Transverse colon (tissue), 4 donors: ENCODE measurements at regions of chr14 and their contacts with region 1.

Region 1: GRCh38 chr14:27078191-27078590 is 480.4 kb upstream of the NOVA1 start:
- DNase-seq: no peak
- H3K4me3 ChIP-seq: no peak overlapping the region
- H3K27ac ChIP-seq: no peak overlapping the region
- H3K4me1 ChIP-seq: no peaks in the 10 kb centered on the region
- H3K27me3 ChIP-seq: no peaks in the 10 kb centered on the region
- CTCF ChIP-seq: no peak
- EP300 ChIP-seq: no peak
- POLR2A ChIP-seq: no peak

Region 2: GRCh38 chr14:25765909-25766308 is 1312.3 kb before region 1 on chr14:
- in situ Hi-C with region 1: no loop called
- intact Hi-C with region 1: no loop called
- DNase-seq: no peak
- H3K4me3 ChIP-seq: no peak overlapping the region
- H3K27ac ChIP-seq: no peak overlapping the region
- H3K4me1 ChIP-seq: no peaks in the 10 kb centered on the region
- H3K27me3 ChIP-seq: no peaks in the 10 kb centered on the region
- CTCF ChIP-seq: no peak
- EP300 ChIP-seq: no peak
- POLR2A ChIP-seq: no peak

Region 3: GRCh38 chr14:26738571-26738970 is 339.6 kb before region 1 on chr14:
- in situ Hi-C with region 1: no loop called
- intact Hi-C with region 1: no loop called
- DNase-seq: no peak
- H3K4me3 ChIP-seq: no peak overlapping the region
- H3K27ac ChIP-seq: no peak overlapping the region
- H3K4me1 ChIP-seq: no peaks in the 10 kb centered on the region
- H3K27me3 ChIP-seq: no peaks in the 10 kb centered on the region
- CTCF ChIP-seq: no peak
- EP300 ChIP-seq: no peak
- POLR2A ChIP-seq: no peak

Region 4: GRCh38 chr14:26959972-26960664 is 118.1 kb before region 1 on chr14:
- in situ Hi-C with region 1: no loop called
- intact Hi-C with region 1: loop called (anchors 5 kb)
- DNase-seq: no peak
- H3K4me3 ChIP-seq: no peak overlapping the region
- H3K27ac ChIP-seq: no peak overlapping the region
- H3K4me1 ChIP-seq: no peaks in the 10 kb centered on the region
- H3K27me3 ChIP-seq: no peaks in the 10 kb centered on the region
- CTCF ChIP-seq: no peak
- EP300 ChIP-seq: no peak
- POLR2A ChIP-seq: no peak

Region 5: GRCh38 chr14:27061299-27061698 is 16.9 kb before region 1 on chr14:
- in situ Hi-C with region 1: no loop called
- intact Hi-C with region 1: no loop called
- DNase-seq: no peak
- H3K4me3 ChIP-seq: no peak overlapping the region
- H3K27ac ChIP-seq: no peak overlapping the region
- H3K4me1 ChIP-seq: no peaks in the 10 kb centered on the region
- H3K27me3 ChIP-seq: no peaks in the 10 kb centered on the region
- CTCF ChIP-seq: no peak
- EP300 ChIP-seq: no peak
- POLR2A ChIP-seq: no peak

Region 6: GRCh38 chr14:27096091-27096490 is 17.9 kb after region 1 on chr14:
- in situ Hi-C with region 1: no loop called
- intact Hi-C with region 1: loop called (anchors 1 kb)
- DNase-seq: no peak
- H3K4me3 ChIP-seq: no peak overlapping the region
- H3K27ac ChIP-seq: no peak overlapping the region
- H3K4me1 ChIP-seq: no peaks in the 10 kb centered on the region
- H3K27me3 ChIP-seq: no peaks in the 10 kb centered on the region
- CTCF ChIP-seq: no peak
- EP300 ChIP-seq: no peak
- POLR2A ChIP-seq: no peak